ENCODE measurements at regions of chr6 and their contacts with region 1.

Region 1: DNA sequence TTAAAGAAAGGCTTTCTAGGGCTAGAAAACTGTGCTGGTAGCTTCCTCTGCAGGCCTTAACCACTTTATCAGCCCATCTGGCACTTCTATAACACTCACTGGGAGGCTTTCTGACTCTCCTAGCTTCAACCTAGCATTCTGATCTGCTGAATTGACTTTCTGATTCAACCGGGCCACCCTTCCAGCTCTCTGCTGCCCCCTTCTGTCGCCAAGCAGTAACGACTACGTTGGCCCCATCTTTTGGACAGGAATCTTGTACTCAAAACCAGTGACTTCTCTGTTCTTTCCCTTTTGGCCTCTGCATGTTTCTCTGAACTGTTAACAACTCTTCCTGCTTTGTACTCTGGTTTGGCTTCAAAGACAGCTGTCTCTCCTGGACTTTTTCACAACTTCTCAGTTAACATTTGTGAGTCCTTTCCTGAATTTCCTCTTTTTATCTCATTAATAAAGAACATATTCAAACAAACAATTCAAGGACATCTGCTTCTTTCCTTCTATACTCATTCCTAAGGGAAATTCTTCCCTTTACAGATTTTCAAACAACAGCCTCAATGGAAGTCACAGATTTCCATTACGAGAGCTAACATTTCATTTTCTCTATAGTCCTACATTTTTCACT is 43.9 kb upstream of the FAM135A start:
- DNase-seq: peak; percentile 33 to 63 (median 48)
- H3K4me3 ChIP-seq: no peak overlapping the region
- H3K4me3 Mint-ChIP-seq: no peak overlapping the region
- H3K27ac ChIP-seq: no peak overlapping the region
- H3K27ac Mint-ChIP-seq: no peak overlapping the region
- H3K4me1 ChIP-seq: no peaks in the 10 kb centered on the region
- H3K4me1 Mint-ChIP-seq: no peaks in the 10 kb centered on the region
- H3K27me3 ChIP-seq: no peaks in the 10 kb centered on the region
- H3K27me3 Mint-ChIP-seq: peaks cover 1 to 21% of the 10 kb centered on the region in 2 donors

Region 2: GRCh38 chr6:70310063-70310694 is 59.3 kb before region 1 on chr6:
- CTCF ChIA-PET with region 1: interaction called, 11 read pairs
- POLR2A ChIA-PET with region 1: no interaction called
- DNase-seq: peak in 1 of 5 donors; percentile 3
- H3K4me3 ChIP-seq: no peak overlapping the region
- H3K4me3 Mint-ChIP-seq: no peak overlapping the region
- H3K27ac ChIP-seq: no peak overlapping the region
- H3K27ac Mint-ChIP-seq: no peak overlapping the region
- H3K4me1 ChIP-seq: no peaks in the 10 kb centered on the region
- H3K4me1 Mint-ChIP-seq: no peaks in the 10 kb centered on the region
- H3K27me3 ChIP-seq: peaks cover 3% of the 10 kb centered on the region
- H3K27me3 Mint-ChIP-seq: peaks cover 2 to 14% of the 10 kb centered on the region in 2 donors

Region 3: DNA sequence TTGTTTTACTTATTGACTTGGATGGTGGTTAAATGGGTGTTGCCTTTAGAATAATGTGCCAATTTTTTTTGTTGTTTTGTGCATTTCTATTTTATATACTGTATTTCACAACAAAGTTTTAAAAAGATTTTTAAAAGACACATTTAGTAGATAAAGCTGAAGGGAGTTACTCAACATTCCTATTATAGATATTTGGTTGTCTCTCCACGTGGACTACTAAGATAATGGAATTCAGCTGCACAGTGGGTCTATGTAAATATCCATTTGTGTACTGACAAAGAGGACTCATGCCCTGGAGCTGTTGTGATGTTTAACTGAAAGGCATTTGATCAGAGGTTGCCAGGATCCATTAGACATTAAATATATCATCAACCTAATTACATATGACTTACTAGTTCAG is 20.6 kb after region 1 on chr6:
- CTCF ChIA-PET with region 1: interaction called, 12 read pairs
- POLR2A ChIA-PET with region 1: no interaction called
- DNase-seq: no peak
- H3K4me3 ChIP-seq: no peak overlapping the region
- H3K4me3 Mint-ChIP-seq: no peak overlapping the region
- H3K27ac ChIP-seq: no peak overlapping the region
- H3K27ac Mint-ChIP-seq: no peak overlapping the region
- H3K4me1 ChIP-seq: no peaks in the 10 kb centered on the region
- H3K4me1 Mint-ChIP-seq: no peaks in the 10 kb centered on the region
- H3K27me3 ChIP-seq: no peaks in the 10 kb centered on the region
- H3K27me3 Mint-ChIP-seq: peaks cover 4 to 41% of the 10 kb centered on the region in 2 donors